Heart right ventricle (tissue), 16 donors: ENCODE measurements at regions of chr7 and their contacts with region 1.

Region 1: DNA sequence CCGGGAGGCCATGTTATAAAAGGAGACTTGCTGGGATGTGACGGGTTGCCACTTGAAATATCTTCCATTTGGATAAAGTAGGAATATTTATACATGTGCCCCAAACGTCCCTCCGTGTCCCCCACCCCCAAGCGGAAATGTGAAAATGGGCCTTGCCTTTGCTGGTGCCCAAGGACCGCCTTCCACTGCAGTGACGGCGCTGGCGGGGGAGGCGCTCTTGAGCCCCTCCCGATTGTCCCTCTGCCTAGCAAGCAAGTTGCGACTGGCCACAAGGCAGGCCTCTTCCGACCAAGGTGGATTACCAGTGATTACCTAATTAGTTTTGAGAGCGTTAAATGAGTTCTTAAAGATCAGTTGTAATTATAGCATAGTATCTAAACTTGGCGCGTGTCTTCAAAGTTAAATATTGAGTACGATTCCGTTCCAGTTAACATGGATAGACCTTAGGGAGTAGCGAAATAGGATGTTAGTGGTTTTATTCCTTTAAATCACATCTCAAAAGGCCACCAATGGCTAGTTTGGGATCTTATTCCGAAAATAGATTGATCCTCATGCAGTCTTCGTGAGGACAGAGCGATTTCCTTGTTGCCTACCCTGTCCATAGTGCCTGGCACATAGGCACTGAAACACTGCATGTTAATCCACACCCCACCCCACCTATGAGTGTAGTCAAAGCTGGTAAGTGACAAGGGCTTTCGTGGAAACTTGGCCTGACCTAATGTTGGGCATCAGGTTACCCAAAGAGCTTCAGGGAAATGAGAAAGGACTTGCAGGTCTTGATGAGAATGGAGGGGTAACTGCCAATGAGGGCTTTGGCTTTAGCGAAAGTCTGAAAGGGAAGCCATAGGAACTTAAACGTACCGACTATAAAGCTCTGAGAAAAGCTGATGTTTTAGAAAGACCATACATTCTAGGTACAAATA is 1.1 kb downstream of the PPIA start:
- DNase-seq: peak; percentile 86 to 93
- ATAC-seq: peak; percentile 77 to 92 (median 87)
- H3K4me3 ChIP-seq: peak overlapping the region; percentile 50 to 86 (median 82)
- H3K27ac ChIP-seq: peak overlapping the region; percentile 97 to 100 (median 100)
- H3K4me1 ChIP-seq: peaks cover 0 to 38% (median 27%) of the 10 kb centered on the region in 9 donors
- H3K27me3 ChIP-seq: no peaks in the 10 kb centered on the region
- CTCF ChIP-seq: peak in 8 of 9 donors; percentile 22 to 65 (median 54)

Region 2: DNA sequence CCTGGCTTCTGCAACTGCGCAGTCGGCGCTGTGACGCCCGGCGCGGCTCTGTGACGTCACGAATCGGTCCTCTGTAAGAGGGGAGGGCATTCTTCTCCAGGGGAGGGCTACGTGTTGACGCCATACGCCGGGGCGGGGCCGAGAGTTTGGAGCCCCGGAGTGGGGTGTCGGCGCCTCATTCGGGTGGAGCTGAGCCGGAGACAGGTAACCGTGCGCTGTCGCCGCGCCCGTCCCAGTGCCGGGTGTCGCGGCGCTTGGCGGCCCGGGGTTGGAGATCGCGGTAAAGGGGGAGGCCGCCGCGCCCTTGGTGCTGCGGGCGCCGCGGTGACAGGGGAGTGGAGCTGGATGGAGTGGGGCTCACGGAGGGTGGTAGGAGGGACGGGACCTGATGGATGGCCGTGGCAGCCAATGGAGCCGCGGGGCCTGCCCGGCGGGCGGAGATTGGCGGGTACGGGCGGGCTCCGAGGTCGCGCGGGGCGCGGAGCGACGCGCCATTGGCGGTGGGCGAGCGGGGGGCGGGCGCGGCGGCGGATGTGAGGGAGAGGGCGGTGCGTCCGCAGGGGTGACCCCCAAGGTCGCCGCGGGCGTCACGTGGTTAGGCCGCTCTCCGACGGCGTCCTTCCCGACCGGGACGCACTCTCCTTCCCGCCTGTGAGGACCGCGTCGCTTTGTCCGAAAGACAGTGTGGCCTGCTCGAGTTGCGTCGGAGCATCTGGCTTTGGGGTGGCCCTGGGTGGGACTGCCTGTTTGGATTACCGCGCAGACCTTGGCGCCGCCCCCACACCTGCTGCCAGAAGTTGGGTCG is 190.9 kb before region 1 on chr7 and contains the start of gene OGDH:
- intact Hi-C with region 1: loop called in 1 of 10 experiments (anchors 1 kb)
- DNase-seq: peak; percentile 99
- ATAC-seq: peak; percentile 96 to 99 (median 98)
- H3K4me3 ChIP-seq: peak within 1 kb of the TSS; percentile 39 to 96 (median 72)
- H3K27ac ChIP-seq: peak within 1 kb of the TSS; percentile 86 to 99 (median 98)
- H3K4me1 ChIP-seq: peaks cover 2 to 35% (median 32%) of the 10 kb centered on the region in 9 donors
- H3K27me3 ChIP-seq: no peaks in the 10 kb centered on the region
- CTCF ChIP-seq: peak in 1 of 9 donors; percentile 8
- total RNA-seq, gene OGDH: 500 to 724 (median 679) TPM

Region 3: GRCh38 chr7:44761207-44762161 is 36.1 kb before region 1 on chr7:
- intact Hi-C with region 1: loop called in 1 of 10 experiments (anchors 5 kb)
- DNase-seq: peak; percentile 59 to 73
- ATAC-seq: peak; percentile 52 to 72 (median 62)
- H3K4me3 ChIP-seq: no peak overlapping the region
- H3K27ac ChIP-seq: no peak overlapping the region
- H3K4me1 ChIP-seq: peaks cover 8 to 26% (median 16%) of the 10 kb centered on the region in 9 donors
- H3K27me3 ChIP-seq: no peaks in the 10 kb centered on the region
- CTCF ChIP-seq: no peak